A673 (cell line): ENCODE measurements at regions of chr3 and their contacts with region 1.

Region 1: GRCh38 chr3:69691860-69692259 is 47.4 kb upstream of the MITF start:
- DNase-seq: peak; percentile 16
- H3K4me3 ChIP-seq: no peak overlapping the region
- H3K27ac ChIP-seq: no peak overlapping the region
- H3K4me1 ChIP-seq: no peaks in the 10 kb centered on the region
- H3K27me3 ChIP-seq: no peaks in the 10 kb centered on the region
- CTCF ChIP-seq: no peak

Region 2: GRCh38 chr3:69739204-69740102 is 47.6 kb after region 1 on chr3 and contains the start of gene MITF:
- CTCF ChIA-PET with region 1: no interaction called
- POLR2A ChIA-PET with region 1: no interaction called
- intact Hi-C with region 1: no loop called
- DNase-seq: peak; percentile 87
- H3K4me3 ChIP-seq: peak within 1 kb of the TSS; percentile 57
- H3K27ac ChIP-seq: no peak within 1 kb of the TSS
- H3K4me1 ChIP-seq: no peaks in the 10 kb centered on the region
- H3K27me3 ChIP-seq: no peaks in the 10 kb centered on the region
- CTCF ChIP-seq: no peak
- total RNA-seq, gene MITF: 0.44 and 0.52 TPM in 2 replicates

Region 3: GRCh38 chr3:69791919-69792399 is 100.1 kb after region 1 on chr3:
- CTCF ChIA-PET with region 1: interaction called, 3 read pairs
- POLR2A ChIA-PET with region 1: no interaction called
- intact Hi-C with region 1: loop called (anchors 2 kb)
- DNase-seq: no peak
- H3K4me3 ChIP-seq: no peak overlapping the region
- H3K27ac ChIP-seq: no peak overlapping the region
- H3K4me1 ChIP-seq: no peaks in the 10 kb centered on the region
- H3K27me3 ChIP-seq: no peaks in the 10 kb centered on the region
- CTCF ChIP-seq: no peak

Region 4: DNA sequence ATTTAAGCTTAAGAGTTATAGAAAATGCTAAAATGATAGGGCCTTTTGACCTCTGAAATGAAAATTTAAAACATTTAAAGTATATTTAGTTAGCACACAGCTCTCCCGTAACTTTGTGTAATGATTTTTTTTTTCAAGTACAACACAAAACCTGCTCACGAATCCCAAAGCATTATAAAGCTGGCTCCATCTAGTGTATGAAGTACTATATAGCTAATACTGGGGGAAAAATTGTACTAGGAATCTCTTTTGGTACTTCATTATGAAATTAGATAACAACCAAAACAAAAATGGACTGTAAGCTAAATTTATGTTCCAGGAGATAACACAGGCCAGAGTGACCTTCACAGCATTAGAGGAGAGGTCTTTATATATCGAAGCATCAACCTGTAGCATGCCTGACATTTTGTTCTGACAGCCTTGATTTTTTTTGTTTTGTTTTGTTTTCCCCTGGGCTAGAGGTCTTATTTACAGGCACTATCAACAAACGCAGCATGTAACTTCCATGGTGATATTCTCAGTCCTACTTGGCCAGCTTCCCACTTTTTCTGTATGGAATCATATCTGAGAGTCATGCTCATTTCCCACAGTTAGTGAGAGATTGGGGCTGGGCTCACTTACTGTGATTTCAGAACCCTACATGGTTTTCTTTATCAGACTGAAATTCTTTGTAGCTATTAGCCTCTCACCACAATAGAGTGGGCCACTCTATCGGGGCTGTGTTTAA is 163.7 kb after region 1 on chr3:
- CTCF ChIA-PET with region 1: no interaction called
- POLR2A ChIA-PET with region 1: no interaction called
- intact Hi-C with region 1: loop called (anchors 2 kb)
- DNase-seq: peak; percentile 14
- H3K4me3 ChIP-seq: no peak overlapping the region
- H3K27ac ChIP-seq: no peak overlapping the region
- H3K4me1 ChIP-seq: no peaks in the 10 kb centered on the region
- H3K27me3 ChIP-seq: no peaks in the 10 kb centered on the region
- CTCF ChIP-seq: peak; percentile 33; the same call in 1 of the 2 replicates

Region 5: GRCh38 chr3:69948246-69948862 is 256.5 kb after region 1 on chr3:
- CTCF ChIA-PET with region 1: no interaction called
- POLR2A ChIA-PET with region 1: no interaction called
- intact Hi-C with region 1: loop called (anchors 5 kb)
- DNase-seq: peak; percentile 36
- H3K4me3 ChIP-seq: no peak overlapping the region
- H3K27ac ChIP-seq: no peak overlapping the region
- H3K4me1 ChIP-seq: no peaks in the 10 kb centered on the region
- H3K27me3 ChIP-seq: no peaks in the 10 kb centered on the region
- CTCF ChIP-seq: peak; percentile 55